ENCODE measurements at regions of chr5 and their contacts with region 1.

Region 1: GRCh38 chr5:119355685-119356611 is at the start of gene TNFAIP8:
- DNase-seq: peak; percentile 70
- ATAC-seq: peak; percentile 66
- H3K4me3 Mint-ChIP-seq: peak within 1 kb of the TSS; percentile 100
- H3K27ac Mint-ChIP-seq: peak within 1 kb of the TSS; percentile 98
- H3K4me1 Mint-ChIP-seq: peaks cover 79% of the 10 kb centered on the region
- H3K27me3 Mint-ChIP-seq: no peaks in the 10 kb centered on the region
- CTCF ChIP-seq: no peak
- total RNA-seq, gene TNFAIP8: 135 and 149 TPM in 2 replicates

Region 2: GRCh38 chr5:119070828-119071572 is 284.9 kb before region 1 on chr5 and contains the start of gene DMXL1:
- CTCF ChIA-PET with region 1: no interaction called
- POLR2A ChIA-PET with region 1: interaction called, 15 read pairs
- intact Hi-C with region 1: loop called (anchors 5 kb)
- DNase-seq: peak; percentile 95
- ATAC-seq: peak; percentile 82
- H3K4me3 Mint-ChIP-seq: peak within 1 kb of the TSS; percentile 99
- H3K27ac Mint-ChIP-seq: peak within 1 kb of the TSS; percentile 98
- H3K4me1 Mint-ChIP-seq: peaks cover 48% of the 10 kb centered on the region
- H3K27me3 Mint-ChIP-seq: peaks cover 2% of the 10 kb centered on the region
- CTCF ChIP-seq: no peak
- total RNA-seq, gene DMXL1: 66.8 and 76.9 TPM in 2 replicates

Region 3: GRCh38 chr5:119255571-119256356 is 100.2 kb before region 1 on chr5:
- CTCF ChIA-PET with region 1: no interaction called
- POLR2A ChIA-PET with region 1: no interaction called
- intact Hi-C with region 1: no loop called
- DNase-seq: no peak
- ATAC-seq: no peak
- H3K4me3 Mint-ChIP-seq: no peak overlapping the region
- H3K27ac Mint-ChIP-seq: no peak overlapping the region
- H3K4me1 Mint-ChIP-seq: peaks cover 2% of the 10 kb centered on the region
- H3K27me3 Mint-ChIP-seq: no peaks in the 10 kb centered on the region
- CTCF ChIP-seq: no peak

Region 4: GRCh38 chr5:119274767-119275130 is 81.2 kb before region 1 on chr5:
- CTCF ChIA-PET with region 1: no interaction called
- POLR2A ChIA-PET with region 1: interaction called, 26 read pairs
- intact Hi-C with region 1: loop called (anchors 1 kb)
- DNase-seq: no peak
- ATAC-seq: peak; percentile 42
- H3K4me3 Mint-ChIP-seq: peak overlapping the region; percentile 78
- H3K27ac Mint-ChIP-seq: peak overlapping the region; percentile 89
- H3K4me1 Mint-ChIP-seq: peaks cover 97% of the 10 kb centered on the region
- H3K27me3 Mint-ChIP-seq: no peaks in the 10 kb centered on the region
- CTCF ChIP-seq: no peak

Region 5: DNA sequence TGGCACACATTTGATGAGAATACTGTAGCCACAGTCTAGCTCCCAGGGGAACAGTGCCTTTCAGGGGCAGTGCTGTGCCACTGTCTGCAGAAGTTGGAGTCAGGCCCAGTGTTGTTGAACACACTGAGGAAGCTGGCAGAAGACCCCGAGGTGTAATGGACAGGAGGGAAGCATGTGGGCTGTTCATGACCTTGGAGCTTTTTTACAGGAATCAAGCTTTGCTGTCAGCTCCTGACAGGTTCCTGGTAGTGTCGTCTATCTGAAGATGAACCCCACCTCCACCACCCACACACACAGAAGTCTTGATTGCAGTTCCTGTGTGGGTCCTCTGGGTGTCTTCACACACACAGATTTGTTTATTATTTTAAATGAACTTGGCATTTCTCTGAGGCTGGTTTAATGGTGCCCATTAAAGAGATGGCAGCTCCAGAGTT is 40.4 kb before region 1 on chr5:
- CTCF ChIA-PET with region 1: interaction called, 28 read pairs
- POLR2A ChIA-PET with region 1: interaction called, 18 read pairs
- intact Hi-C with region 1: loop called (anchors 1 kb)
- DNase-seq: no peak
- ATAC-seq: peak; percentile 78
- H3K4me3 Mint-ChIP-seq: peak overlapping the region; percentile 55
- H3K27ac Mint-ChIP-seq: peak overlapping the region; percentile 82
- H3K4me1 Mint-ChIP-seq: peaks cover 92% of the 10 kb centered on the region
- H3K27me3 Mint-ChIP-seq: no peaks in the 10 kb centered on the region
- CTCF ChIP-seq: no peak

Region 6: GRCh38 chr5:119367502-119368237 is 11.7 kb after region 1 on chr5:
- CTCF ChIA-PET with region 1: interaction called, 6 read pairs
- POLR2A ChIA-PET with region 1: interaction called, 103 read pairs
- intact Hi-C with region 1: loop called (anchors 1 kb)
- DNase-seq: no peak
- ATAC-seq: peak; percentile 68
- H3K4me3 Mint-ChIP-seq: peak overlapping the region; percentile 71
- H3K27ac Mint-ChIP-seq: peak overlapping the region; percentile 84
- H3K4me1 Mint-ChIP-seq: peaks cover 89% of the 10 kb centered on the region
- H3K27me3 Mint-ChIP-seq: no peaks in the 10 kb centered on the region
- CTCF ChIP-seq: no peak

Region 7: GRCh38 chr5:119397518-119398380 is 41.8 kb after region 1 on chr5:
- CTCF ChIA-PET with region 1: interaction called, 3 read pairs
- POLR2A ChIA-PET with region 1: interaction called, 9 read pairs
- intact Hi-C with region 1: loop called (anchors 2 kb)
- DNase-seq: no peak
- ATAC-seq: peak; percentile 45
- H3K4me3 Mint-ChIP-seq: peak overlapping the region; percentile 67
- H3K27ac Mint-ChIP-seq: peak overlapping the region; percentile 80
- H3K4me1 Mint-ChIP-seq: peaks cover 88% of the 10 kb centered on the region
- H3K27me3 Mint-ChIP-seq: no peaks in the 10 kb centered on the region
- CTCF ChIP-seq: no peak

Measured in activated B cell treated with CpG ODN at 0.5 μM for 24 hours (primary cell).